CD4-positive, alpha-beta T cell (primary cell): ENCODE measurements at regions of chr10 and their contacts with region 1.

Region 1: GRCh38 chr10:32367793-32368453 is 21.0 kb upstream of the EPC1 start:
- DNase-seq: peak; percentile 63 to 89 (median 72)
- ATAC-seq: peak; percentile 75
- H3K4me3 ChIP-seq: no peak overlapping the region
- H3K4me3 Mint-ChIP-seq: peak overlapping the region; percentile 26
- H3K27ac ChIP-seq: peak overlapping the region in 1 of 2 donors; percentile 38
- H3K27ac Mint-ChIP-seq: peak overlapping the region; percentile 58
- H3K4me1 ChIP-seq: peaks cover 55% of the 10 kb centered on the region
- H3K4me1 Mint-ChIP-seq: peaks cover 72% of the 10 kb centered on the region
- H3K27me3 ChIP-seq: no peaks in the 10 kb centered on the region
- H3K27me3 Mint-ChIP-seq: no peaks in the 10 kb centered on the region
- CTCF ChIP-seq: peak; percentile 92

Region 2: DNA sequence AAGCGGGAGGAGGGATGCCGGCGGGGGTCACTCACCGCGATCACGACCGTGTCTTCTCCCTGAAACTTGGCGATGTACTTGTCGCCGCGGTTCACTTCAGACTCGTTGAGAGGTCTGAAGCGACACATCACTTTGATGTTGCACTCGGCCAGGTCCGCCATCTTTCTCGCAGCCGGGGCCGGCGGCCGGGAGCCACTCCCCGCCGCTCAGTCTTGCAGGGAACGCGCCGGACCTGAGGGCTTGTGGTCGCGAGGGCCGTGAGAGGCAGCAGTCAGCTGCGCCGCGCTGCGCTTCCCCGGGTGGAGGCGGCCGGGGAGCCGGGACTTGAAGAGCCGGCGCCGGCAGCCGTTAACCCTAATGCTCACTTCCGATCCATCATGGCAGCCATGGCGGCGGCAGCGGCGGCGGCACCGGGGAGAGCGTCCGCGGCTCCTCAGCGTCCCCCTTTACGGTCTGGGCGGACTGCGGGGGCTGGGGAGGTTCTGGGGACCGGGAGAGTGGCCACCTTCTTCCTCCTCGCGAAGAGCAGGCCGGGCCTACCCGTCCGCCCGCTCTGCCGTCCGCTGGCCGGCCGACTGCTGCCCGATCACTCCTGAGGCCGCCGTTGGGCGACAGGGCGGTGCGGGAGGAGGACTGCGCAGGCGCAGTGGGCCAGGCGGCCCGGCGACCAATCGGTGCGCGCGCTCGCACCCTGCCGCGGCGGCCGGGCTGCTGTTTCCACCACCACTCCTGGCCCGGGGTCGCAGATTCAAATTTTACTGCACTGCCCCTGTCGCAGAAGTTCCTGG is 311.9 kb before region 1 on chr10 and contains the start of gene KIF5B:
- CTCF ChIA-PET with region 1: no interaction called
- POLR2A ChIA-PET with region 1: no interaction called
- intact Hi-C with region 1: loop called (anchors 5 to 10 kb)
- DNase-seq: peak; percentile 74 to 95 (median 84)
- ATAC-seq: peak; percentile 79
- H3K4me3 ChIP-seq: peak within 1 kb of the TSS; percentile 98
- H3K4me3 Mint-ChIP-seq: peak within 1 kb of the TSS; percentile 95
- H3K27ac ChIP-seq: peak within 1 kb of the TSS; percentile 77 to 92
- H3K27ac Mint-ChIP-seq: peak within 1 kb of the TSS; percentile 95
- H3K4me1 ChIP-seq: peaks cover 18% of the 10 kb centered on the region
- H3K4me1 Mint-ChIP-seq: peaks cover 54% of the 10 kb centered on the region
- H3K27me3 ChIP-seq: no peaks in the 10 kb centered on the region
- H3K27me3 Mint-ChIP-seq: no peaks in the 10 kb centered on the region
- CTCF ChIP-seq: no peak
- total RNA-seq, gene KIF5B: 58.3 to 59.0 TPM

Region 3: GRCh38 chr10:32190890-32191491 is 176.9 kb before region 1 on chr10:
- CTCF ChIA-PET with region 1: no interaction called
- POLR2A ChIA-PET with region 1: no interaction called
- intact Hi-C with region 1: loop called (anchors 1 to 2 kb)
- DNase-seq: peak in 3 of 14 experiments; percentile 53 to 68 (median 64)
- ATAC-seq: peak; percentile 63
- H3K4me3 ChIP-seq: no peak overlapping the region
- H3K4me3 Mint-ChIP-seq: no peak overlapping the region
- H3K27ac ChIP-seq: no peak overlapping the region
- H3K27ac Mint-ChIP-seq: no peak overlapping the region
- H3K4me1 ChIP-seq: no peaks in the 10 kb centered on the region
- H3K4me1 Mint-ChIP-seq: peaks cover 4% of the 10 kb centered on the region
- H3K27me3 ChIP-seq: no peaks in the 10 kb centered on the region
- H3K27me3 Mint-ChIP-seq: peaks cover 5% of the 10 kb centered on the region
- CTCF ChIP-seq: peak; percentile 84

Region 4: GRCh38 chr10:32256613-32257437 is 111.1 kb before region 1 on chr10:
- CTCF ChIA-PET with region 1: interaction called, 4 read pairs
- POLR2A ChIA-PET with region 1: no interaction called
- intact Hi-C with region 1: loop called (anchors 1 to 2 kb)
- DNase-seq: peak; percentile 43 to 84 (median 62)
- ATAC-seq: peak; percentile 78
- H3K4me3 ChIP-seq: no peak overlapping the region
- H3K4me3 Mint-ChIP-seq: no peak overlapping the region
- H3K27ac ChIP-seq: no peak overlapping the region
- H3K27ac Mint-ChIP-seq: no peak overlapping the region
- H3K4me1 ChIP-seq: peaks cover 9% of the 10 kb centered on the region
- H3K4me1 Mint-ChIP-seq: peaks cover 5% of the 10 kb centered on the region
- H3K27me3 ChIP-seq: no peaks in the 10 kb centered on the region
- H3K27me3 Mint-ChIP-seq: no peaks in the 10 kb centered on the region
- CTCF ChIP-seq: peak; percentile 92

Region 5: GRCh38 chr10:32538256-32538655 is 170.3 kb after region 1 on chr10:
- CTCF ChIA-PET with region 1: no interaction called
- POLR2A ChIA-PET with region 1: no interaction called
- intact Hi-C with region 1: no loop called
- DNase-seq: no peak
- ATAC-seq: no peak
- H3K4me3 ChIP-seq: no peak overlapping the region
- H3K4me3 Mint-ChIP-seq: no peak overlapping the region
- H3K27ac ChIP-seq: no peak overlapping the region
- H3K27ac Mint-ChIP-seq: no peak overlapping the region
- H3K4me1 ChIP-seq: no peaks in the 10 kb centered on the region
- H3K4me1 Mint-ChIP-seq: peaks cover 9% of the 10 kb centered on the region
- H3K27me3 ChIP-seq: no peaks in the 10 kb centered on the region
- H3K27me3 Mint-ChIP-seq: no peaks in the 10 kb centered on the region
- CTCF ChIP-seq: no peak